ENCODE measurements at regions of chr5 and their contacts with region 1.

Region 1: DNA sequence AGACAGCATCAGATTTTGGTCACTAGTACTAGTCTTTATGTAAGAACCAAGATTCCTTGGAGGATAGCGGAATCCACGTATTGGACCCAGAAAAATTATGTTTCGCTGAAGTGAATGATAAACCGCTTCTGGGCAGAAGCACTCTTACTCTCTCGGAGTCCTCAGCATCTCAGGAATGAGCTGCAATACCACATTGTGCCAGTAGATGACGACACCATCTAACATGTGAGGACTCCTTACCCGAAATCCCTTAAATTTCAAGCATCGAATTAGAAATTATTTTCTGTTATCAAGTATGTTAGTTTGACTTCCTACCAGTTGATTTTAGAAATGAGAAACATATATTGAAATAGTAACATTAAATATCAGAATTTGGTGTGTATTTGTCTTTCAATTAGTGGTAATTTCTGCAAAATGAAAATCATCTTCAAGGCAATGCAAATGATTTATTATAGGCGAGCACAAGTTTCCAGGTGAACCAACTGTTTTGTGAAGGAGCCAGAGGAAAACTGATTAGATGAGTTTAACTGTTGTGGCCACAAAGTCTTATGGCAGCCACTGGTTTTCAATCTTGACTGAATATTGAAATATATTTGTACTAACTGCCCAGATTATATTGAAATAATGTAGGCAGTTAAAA is 66.0 kb upstream of the CAMK4 start:
- DNase-seq: peak; percentile 64
- ATAC-seq: peak; percentile 63 to 70

Region 2: DNA sequence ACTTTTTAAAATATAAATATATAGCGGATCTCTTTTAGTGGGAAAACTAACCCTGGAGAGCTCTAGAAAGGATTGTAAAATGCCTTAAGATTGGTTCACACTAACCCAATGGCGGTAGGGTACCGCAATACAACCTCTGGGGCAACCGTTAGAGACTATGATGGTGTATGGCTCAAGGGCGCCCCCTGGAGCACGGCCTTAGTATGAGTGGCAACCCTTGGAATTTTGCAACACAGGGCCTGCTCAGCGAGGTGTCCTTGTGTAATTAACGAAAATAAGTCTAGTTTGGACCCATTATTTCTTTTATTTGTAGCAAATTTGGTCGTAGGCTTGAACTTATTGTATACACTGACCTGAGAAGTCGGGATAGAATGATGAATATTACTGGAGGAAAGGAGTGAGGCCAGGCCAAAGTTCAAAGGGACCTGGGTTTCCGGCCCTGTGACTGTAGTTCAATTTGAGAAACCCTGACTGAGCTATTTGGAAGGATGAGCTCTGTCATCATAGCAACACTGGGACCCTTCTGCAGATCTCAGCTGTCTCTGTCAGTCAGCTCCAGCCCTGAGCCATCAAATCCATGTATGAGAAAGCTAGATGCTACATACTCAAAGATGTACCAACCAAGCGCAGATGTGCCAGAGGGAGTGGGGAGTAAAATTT is 120.8 kb after region 1 on chr5:
- intact Hi-C with region 1: loop called (anchors 5 to 10 kb)
- DNase-seq: peak; percentile 36
- ATAC-seq: peak; percentile 38 to 61

Region 3: GRCh38 chr5:111512375-111513130 is 354.3 kb after region 1 on chr5 and contains the start of gene STARD4:
- intact Hi-C with region 1: no loop called
- DNase-seq: peak; percentile 96
- ATAC-seq: peak; percentile 98
- total RNA-seq, gene STARD4: 6.5 to 22.3 TPM

Region 4: DNA sequence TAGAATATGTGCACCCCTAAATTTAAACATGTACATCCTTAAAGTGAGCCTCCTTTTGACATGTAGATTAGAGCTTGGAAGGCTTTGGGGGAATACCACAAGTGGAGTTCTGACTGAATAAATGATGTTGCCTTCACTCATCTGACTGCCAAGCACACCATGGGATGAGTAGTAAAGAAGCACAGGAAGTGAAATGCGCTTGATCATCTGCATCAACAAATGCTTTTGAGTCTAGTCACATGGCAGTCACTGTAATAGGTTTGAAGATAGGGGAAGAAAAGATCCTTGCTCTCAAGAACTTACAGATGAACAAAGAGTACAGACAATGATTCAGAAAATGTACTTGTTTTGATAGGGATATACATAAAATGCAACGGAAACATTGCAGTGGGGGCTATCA is 416.1 kb after region 1 on chr5:
- intact Hi-C with region 1: no loop called
- DNase-seq: no peak
- ATAC-seq: no peak